ENCODE measurements at regions of chr12 and their contacts with region 1.

Region 1: DNA sequence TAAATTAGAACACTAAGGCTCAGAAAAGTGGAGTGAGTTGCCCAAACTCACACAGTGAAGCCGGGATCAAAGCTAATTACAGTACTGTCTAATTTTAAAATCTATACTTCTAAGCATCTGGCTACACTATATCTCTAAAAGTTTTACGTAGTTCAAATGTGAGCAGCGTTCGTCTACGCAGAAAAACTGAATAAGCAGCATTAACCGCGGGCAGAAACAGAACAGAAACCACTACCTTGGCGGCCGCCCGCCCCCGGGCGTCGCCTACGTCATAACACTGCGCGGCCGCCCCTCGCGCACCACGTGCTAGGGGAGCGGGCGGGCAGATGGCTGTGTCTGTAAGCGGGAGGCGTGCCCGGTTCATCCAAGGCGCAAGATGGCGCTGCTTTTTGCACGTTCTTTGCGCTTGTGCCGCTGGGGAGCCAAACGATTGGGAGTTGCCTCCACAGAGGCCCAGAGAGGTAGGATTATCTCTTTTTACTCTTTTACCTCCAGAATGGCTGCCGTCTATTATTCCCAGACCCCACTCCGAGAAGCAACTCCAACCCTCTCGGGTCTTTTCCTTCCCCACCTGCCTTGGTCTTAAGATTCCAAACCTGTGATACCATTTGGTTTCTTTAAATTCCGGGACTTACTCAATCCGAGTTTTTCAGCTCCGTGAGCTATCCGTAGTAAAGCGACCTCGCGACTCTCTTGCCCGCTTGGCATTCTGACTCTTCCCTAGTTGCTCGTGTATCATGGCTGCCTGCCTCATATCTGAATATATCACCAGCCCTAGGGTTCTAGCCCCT is at the start of gene SPRYD4:
- DNase-seq: peak; percentile 94 to 96 (median 94)
- ATAC-seq: peak; percentile 96 to 99 (median 97)
- H3K4me3 ChIP-seq: peak within 1 kb of the TSS; percentile 53 to 95 (median 78)
- H3K27ac ChIP-seq: peak within 1 kb of the TSS; percentile 40 to 95 (median 89)
- H3K4me1 ChIP-seq: peaks cover 0 to 34% (median 10%) of the 10 kb centered on the region in 12 donors
- H3K27me3 ChIP-seq: no peaks in the 10 kb centered on the region
- CTCF ChIP-seq: peak in 10 of 12 donors; percentile 18 to 64 (median 38)
- POLR2A ChIP-seq: peak in 1 of 2 donors; percentile 84
- total RNA-seq, gene SPRYD4: 2.2 to 4.7 (median 3.0) TPM

Region 2: GRCh38 chr12:56127888-56128669 is 340.3 kb before region 1 on chr12 and contains the start of gene ESYT1:
- intact Hi-C with region 1: loop called in 5 of 10 experiments (anchors 5 to 10 kb)
- DNase-seq: peak; percentile 97 to 99 (median 99)
- ATAC-seq: peak; percentile 95 to 98 (median 96)
- H3K4me3 ChIP-seq: peak within 1 kb of the TSS; percentile 75 to 97 (median 84)
- H3K27ac ChIP-seq: peak within 1 kb of the TSS; percentile 23 to 94 (median 90)
- H3K4me1 ChIP-seq: peaks cover 8 to 61% (median 31%) of the 10 kb centered on the region in 12 donors
- H3K27me3 ChIP-seq: no peaks in the 10 kb centered on the region
- CTCF ChIP-seq: no peak
- POLR2A ChIP-seq: peak in 1 of 2 donors; percentile 97
- total RNA-seq, gene ESYT1: 26.8 to 81.1 (median 43.4) TPM

Region 3: DNA sequence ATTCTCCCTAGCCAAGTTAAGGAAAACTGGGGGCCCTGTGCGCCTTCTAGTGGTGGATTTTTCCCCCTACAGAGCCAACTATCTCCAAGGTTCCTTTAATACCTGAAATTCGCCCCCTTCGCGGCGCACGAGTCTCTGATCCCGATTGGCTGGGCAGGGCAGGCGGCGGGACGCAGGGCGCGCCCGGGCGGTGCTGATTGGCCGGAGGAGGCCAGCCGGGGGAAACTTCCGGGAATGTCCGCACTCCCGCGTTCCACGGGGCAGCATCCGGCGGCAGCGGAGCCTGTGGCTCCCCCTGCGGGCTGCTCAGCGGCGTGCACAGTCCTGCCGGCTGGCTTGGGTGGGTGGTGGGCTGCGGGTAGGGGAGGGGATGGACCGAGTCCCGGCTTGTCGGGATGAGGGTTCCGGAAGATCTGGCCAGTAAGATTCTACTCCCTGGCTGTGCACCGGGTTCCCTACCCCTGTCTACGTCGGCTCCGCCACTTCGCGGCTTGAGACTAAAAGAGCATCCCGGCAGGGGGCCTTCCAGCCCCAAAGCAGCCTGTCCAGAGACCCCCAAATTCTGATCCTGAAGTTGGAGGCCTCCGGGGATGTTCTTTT is 244.2 kb before region 1 on chr12 and contains the start of gene NABP2:
- intact Hi-C with region 1: loop called in 1 of 10 experiments (anchors 10 kb)
- DNase-seq: peak; percentile 98 to 99 (median 99)
- ATAC-seq: peak; percentile 80 to 90 (median 85)
- H3K4me3 ChIP-seq: peak within 1 kb of the TSS; percentile 52 to 97 (median 66)
- H3K27ac ChIP-seq: peak within 1 kb of the TSS; percentile 19 to 98 (median 92)
- H3K4me1 ChIP-seq: peaks cover 8 to 46% (median 37%) of the 10 kb centered on the region in 12 donors
- H3K27me3 ChIP-seq: no peaks in the 10 kb centered on the region
- CTCF ChIP-seq: peak; percentile 66 to 98 (median 91)
- POLR2A ChIP-seq: peak in 1 of 2 donors; percentile 55
- total RNA-seq, gene NABP2: 18.0 to 27.4 (median 20.7) TPM

Region 4: DNA sequence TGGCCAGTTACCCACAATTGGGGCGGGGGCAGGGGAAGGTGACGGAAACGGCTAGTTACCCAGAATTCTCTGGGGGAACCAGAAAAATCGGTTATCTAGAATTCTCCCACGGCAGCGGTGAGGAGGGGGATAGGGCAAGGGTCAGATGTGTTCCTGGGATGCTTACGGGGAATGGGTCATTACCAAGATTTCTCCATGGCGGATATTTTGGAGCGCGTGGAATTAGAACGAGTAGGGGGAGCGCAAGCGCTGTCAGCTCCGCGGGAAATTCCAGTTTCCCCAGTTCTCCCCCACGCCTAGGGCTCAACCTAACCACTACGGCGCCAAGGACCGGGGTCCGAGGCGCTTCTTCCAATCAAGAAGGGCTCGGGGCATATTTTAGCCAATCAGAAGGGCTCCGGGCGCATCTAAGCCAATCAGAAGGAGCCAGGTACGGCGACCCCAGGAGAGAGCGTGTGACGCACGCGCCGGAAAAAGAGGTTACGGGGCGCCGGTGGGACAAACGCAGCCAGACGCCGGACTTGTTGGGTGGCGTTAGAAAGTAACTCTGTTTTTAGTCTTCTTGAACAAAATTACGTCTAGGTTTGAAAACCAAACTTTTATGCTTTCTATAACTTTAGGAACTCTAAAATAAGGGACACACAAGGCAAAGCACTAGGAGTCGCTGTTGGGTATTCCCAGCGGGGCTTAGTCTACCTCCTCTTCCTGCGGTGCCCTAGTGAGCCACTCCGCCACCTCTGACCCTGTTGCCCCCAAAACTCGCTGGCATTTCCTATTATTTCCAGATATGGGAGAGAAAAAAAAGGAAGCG is 134.5 kb before region 1 on chr12 and contains the start of gene PAN2:
- intact Hi-C with region 1: loop called in 5 of 10 experiments (anchors 10 kb)
- DNase-seq: peak; percentile 96 to 98 (median 97)
- ATAC-seq: peak; percentile 98 to 100 (median 99)
- H3K4me3 ChIP-seq: peak within 1 kb of the TSS; percentile 32 to 93 (median 68)
- H3K27ac ChIP-seq: peak within 1 kb of the TSS; percentile 88 to 100 (median 95)
- H3K4me1 ChIP-seq: peaks cover 0 to 39% (median 13%) of the 10 kb centered on the region in 12 donors
- H3K27me3 ChIP-seq: no peaks in the 10 kb centered on the region
- CTCF ChIP-seq: peak in 11 of 12 donors; percentile 24 to 66 (median 50)
- POLR2A ChIP-seq: peak; percentile 40 to 80
- total RNA-seq, gene PAN2: 12.3 to 43.8 (median 38.2) TPM

Region 5: DNA sequence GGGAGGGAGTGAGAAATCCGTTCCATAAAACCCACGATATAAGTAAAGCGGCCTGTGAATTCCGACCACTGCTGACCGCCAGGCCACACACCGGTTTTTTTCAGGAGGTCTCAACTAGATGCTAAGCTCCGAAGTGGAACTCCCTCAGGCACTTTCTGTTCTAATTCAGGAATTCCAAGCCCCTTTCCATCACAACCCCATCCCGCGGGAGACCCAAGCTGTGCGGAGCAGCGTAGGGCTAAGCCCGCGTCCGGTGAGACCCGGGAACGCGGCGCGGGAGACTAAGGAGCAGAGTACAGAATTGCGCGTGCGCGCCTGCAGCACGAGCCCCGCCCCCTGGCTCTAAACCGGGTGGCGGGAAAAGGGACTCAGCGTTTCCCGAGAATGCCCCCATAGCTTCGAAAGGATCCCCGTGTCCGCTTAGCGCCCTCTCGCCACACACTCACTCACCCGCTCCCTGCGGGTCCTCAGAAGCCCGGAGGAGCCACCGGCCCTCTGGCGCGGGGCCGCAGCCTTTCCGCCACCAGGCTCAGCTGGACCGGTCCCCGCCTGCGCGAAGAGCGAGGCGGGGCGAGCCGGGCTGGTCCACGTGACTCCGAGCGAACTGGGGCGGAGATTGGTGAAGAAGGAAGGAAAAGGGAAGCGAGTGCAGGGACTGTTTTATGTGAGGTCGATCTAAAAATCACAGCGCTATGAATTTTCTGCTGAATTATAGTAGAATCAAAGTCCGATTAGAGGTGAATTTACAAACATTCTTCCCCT is 19.4 kb before region 1 on chr12 and contains the start of gene TIMELESS:
- intact Hi-C with region 1: loop called in 1 of 10 experiments (anchors 2 kb)
- DNase-seq: peak; percentile 89 to 92 (median 90)
- ATAC-seq: peak; percentile 96 to 99 (median 98)
- H3K4me3 ChIP-seq: peak within 1 kb of the TSS; percentile 46 to 86 (median 69)
- H3K27ac ChIP-seq: peak within 1 kb of the TSS; percentile 69 to 94 (median 86)
- H3K4me1 ChIP-seq: peaks cover 0 to 22% (median 10%) of the 10 kb centered on the region in 12 donors
- H3K27me3 ChIP-seq: no peaks in the 10 kb centered on the region
- CTCF ChIP-seq: peak in 4 of 12 donors; percentile 6 to 16 (median 14)
- POLR2A ChIP-seq: peak in 1 of 2 donors; percentile 50
- total RNA-seq, gene TIMELESS: 1.1 to 7.3 (median 2.4) TPM

Region 6: GRCh38 chr12:56529290-56530055 is 61.1 kb after region 1 on chr12:
- intact Hi-C with region 1: no loop called
- DNase-seq: no peak
- ATAC-seq: no peak
- H3K4me3 ChIP-seq: no peak overlapping the region
- H3K27ac ChIP-seq: peak overlapping the region in 1 of 12 donors; percentile 15
- H3K4me1 ChIP-seq: peaks cover 0 to 60% (median 33%) of the 10 kb centered on the region in 12 donors
- H3K27me3 ChIP-seq: no peaks in the 10 kb centered on the region
- CTCF ChIP-seq: no peak
- POLR2A ChIP-seq: no peak